ENCODE measurements at regions of chr5 and their contacts with region 1.

Region 1: DNA sequence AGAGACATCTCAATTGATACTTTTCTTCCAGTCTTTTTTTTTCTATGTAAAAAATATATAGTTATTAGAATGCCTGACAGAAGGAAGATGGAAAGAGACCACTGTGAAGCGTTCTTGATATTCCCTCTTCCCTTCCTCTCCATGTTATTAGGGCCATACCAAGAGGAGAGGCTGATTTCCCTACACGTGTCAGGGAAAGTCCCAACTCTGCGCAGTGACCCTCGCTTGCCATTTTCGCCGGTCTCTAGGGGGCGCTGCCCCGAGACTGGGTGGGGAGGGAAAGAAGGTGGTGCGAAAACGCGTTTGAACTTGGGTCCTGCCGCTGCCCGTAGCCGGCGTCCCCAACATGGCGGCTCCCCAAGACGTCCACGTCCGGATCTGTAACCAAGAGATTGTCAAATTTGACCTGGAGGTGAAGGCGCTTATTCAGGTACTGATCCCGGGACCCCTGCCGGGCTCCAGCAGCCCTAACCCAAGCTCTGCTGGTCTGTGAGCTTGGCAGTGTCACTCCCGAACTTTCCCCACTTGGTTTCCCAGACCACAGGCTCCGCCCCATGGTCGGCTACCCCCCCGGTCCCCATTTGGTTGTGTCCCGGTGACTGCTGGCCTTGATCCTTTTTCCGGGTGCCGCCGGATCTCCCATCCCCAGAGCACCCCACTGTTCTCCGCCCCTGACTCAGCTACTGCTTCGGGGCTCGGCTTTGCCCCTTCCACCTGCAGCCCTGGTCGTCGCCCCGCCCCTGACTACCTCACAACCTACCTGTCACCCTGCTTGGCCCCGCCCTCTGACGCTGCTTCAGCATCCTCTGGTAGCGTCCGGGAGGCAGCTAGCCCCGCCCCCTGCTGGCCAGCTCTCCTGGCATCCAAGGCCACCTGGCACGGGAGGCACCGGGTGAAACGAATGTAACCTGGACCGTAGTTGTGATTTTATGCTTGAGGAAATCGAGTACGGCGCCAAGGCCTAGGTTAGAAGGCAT is at the start of gene BNIP1:
- DNase-seq: peak; percentile 91
- H3K4me3 Mint-ChIP-seq: peak within 1 kb of the TSS; percentile 96
- H3K27ac Mint-ChIP-seq: peak within 1 kb of the TSS; percentile 97
- H3K4me1 Mint-ChIP-seq: peaks cover 9% of the 10 kb centered on the region
- H3K27me3 Mint-ChIP-seq: no peaks in the 10 kb centered on the region
- total RNA-seq, gene BNIP1: 22.6 and 25.3 TPM in 2 replicates

Region 2: DNA sequence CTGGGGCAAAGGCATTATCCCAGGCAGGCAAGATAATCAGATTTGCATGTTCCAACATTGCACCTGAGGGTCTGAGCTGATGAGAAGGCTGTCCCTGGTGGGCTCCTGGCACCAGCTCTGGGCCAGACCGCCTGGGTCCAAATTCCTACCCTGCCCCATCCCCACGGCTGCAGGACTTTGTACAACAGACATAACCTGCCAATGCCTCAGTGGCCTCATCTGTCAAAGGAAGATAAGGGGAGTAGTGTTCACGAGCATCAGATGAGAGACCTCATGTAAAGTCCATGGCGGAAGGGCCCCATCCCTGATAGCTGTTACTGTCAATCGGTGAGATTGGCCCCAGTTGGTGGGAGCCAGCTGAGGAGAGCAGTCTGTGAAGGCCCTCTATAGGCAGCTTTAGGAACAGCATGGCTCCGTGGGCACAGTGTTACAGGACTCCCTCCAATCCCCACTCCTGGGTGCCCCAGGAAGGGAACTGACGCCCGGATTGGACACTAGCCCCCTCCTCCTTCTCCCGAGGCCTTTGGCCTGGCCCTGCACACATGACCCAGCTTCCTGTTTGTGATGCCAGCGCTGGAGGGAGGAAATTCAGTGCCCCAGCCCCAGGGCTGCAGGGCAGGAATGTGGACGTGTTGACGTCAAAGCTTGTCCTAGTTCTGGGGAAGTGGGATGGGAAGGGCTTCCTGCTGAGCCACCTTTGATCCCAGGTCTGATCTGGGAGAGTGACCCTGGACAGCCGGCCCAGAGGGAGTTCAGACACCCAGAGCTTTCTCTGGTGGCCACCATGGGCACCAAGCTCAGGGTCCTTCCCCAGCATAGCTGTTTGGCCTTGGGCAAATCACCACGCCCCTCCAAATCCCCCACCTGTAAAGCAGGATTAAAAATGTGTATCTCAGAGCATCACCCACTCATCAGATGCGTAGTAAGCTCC is 429.7 kb before region 1 on chr5:
- intact Hi-C with region 1: loop called (anchors 10 kb)
- DNase-seq: peak; percentile 45
- H3K4me3 Mint-ChIP-seq: no peak overlapping the region
- H3K27ac Mint-ChIP-seq: no peak overlapping the region
- H3K4me1 Mint-ChIP-seq: no peaks in the 10 kb centered on the region
- H3K27me3 Mint-ChIP-seq: peaks cover 7% of the 10 kb centered on the region

Region 3: DNA sequence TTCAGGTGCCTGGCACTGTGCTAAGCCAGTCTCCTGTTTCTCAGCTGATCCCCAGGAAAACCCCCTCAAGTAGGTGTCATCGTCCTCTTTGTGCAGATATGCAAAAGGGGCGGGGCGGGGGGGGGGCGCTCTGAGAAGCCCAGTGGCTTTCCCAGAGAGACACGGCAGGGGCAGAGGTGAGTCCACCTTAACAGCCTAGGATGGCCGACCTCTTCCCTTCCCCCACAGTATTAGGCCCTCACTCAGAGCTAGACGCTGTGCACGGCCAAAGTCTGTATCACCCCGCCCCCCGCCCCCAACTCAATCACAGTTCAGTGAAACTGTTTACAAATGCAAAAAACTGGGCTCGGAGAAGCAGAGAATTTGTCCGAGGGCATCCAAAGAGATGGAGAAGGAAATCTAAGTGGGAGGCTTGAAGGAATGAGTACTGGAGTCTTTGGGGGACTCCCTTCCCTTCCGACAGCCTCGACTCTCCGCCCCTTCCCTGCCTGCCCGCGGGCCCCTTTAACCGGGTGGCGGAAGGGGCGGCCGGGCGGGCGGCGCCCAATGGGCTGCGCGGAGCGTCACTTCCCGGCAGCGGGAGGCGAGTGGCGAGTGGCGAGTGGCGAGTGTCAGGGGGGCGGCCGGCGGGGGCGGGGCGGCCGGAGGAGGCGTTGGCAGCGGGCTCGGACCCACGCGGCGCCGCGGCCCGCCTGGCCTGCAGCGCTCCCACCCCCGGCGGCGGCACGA is 310.6 kb before region 1 on chr5 and contains the start of gene ERGIC1:
- intact Hi-C with region 1: loop called (anchors 1 kb)
- DNase-seq: peak; percentile 79
- H3K4me3 Mint-ChIP-seq: peak within 1 kb of the TSS; percentile 88
- H3K27ac Mint-ChIP-seq: peak within 1 kb of the TSS; percentile 85
- H3K4me1 Mint-ChIP-seq: peaks cover 19% of the 10 kb centered on the region
- H3K27me3 Mint-ChIP-seq: no peaks in the 10 kb centered on the region
- total RNA-seq, gene ERGIC1: 47.4 and 47.9 TPM in 2 replicates

Region 4: DNA sequence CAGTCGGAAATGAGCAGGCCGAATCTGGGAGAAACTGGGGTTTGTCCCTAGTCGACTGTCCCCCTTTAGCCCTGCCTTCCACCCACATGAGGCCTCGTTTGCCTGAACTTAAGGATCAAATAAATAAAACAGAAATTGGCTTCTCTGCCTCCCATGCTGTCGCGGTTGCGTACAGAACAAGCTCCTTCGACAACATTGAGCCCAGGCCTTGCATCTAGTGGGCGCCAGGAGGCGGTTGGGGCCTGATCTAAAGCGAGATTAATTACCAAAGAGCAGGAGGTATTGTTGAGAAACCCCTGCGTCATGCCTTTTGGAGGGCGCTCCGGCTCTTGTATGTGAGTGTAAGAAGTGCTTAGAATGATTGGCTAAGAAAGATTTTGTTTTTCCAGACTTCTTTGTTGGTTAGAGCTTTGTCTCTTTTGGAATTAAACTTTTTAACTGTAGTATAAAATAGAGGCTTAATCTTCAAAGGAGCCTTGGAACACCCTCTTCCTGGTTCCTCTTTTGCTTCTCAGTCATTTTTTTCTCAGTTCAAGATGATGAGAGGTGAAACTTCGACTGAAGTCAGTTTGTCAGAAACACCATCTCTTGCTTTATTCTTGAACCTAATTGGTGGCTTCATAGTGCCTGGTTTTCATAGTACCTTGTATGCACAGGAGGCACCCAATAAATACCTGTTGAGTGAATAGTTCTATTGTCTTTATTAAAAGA is 160.1 kb before region 1 on chr5:
- intact Hi-C with region 1: loop called (anchors 1 kb)
- DNase-seq: peak; percentile 60
- H3K4me3 Mint-ChIP-seq: peak overlapping the region; percentile 96
- H3K27ac Mint-ChIP-seq: peak overlapping the region; percentile 98
- H3K4me1 Mint-ChIP-seq: peaks cover 16% of the 10 kb centered on the region
- H3K27me3 Mint-ChIP-seq: no peaks in the 10 kb centered on the region

Region 5: DNA sequence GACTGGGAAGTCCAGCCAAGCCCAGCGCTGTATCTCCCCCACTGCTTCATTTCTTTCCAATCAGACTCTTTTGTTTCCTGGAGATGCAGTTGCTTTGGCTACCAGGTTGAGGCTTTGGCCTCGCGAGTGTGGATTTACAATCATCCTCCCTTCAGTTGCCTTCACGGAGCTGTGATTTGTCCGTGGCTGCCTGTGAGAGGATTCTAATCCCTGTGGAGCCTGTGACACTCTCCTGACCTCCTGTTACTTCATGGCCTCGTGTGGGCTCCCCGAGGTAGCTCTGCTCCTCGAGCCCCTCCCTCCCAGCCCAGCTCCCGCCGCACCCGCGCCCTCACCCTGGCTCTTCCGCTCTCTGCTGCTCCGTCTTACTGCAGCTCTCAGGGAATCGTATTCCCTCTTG is 291.0 kb after region 1 on chr5:
- intact Hi-C with region 1: no loop called
- DNase-seq: no peak
- H3K4me3 Mint-ChIP-seq: no peak overlapping the region
- H3K27ac Mint-ChIP-seq: no peak overlapping the region
- H3K4me1 Mint-ChIP-seq: no peaks in the 10 kb centered on the region
- H3K27me3 Mint-ChIP-seq: no peaks in the 10 kb centered on the region

Region 6: DNA sequence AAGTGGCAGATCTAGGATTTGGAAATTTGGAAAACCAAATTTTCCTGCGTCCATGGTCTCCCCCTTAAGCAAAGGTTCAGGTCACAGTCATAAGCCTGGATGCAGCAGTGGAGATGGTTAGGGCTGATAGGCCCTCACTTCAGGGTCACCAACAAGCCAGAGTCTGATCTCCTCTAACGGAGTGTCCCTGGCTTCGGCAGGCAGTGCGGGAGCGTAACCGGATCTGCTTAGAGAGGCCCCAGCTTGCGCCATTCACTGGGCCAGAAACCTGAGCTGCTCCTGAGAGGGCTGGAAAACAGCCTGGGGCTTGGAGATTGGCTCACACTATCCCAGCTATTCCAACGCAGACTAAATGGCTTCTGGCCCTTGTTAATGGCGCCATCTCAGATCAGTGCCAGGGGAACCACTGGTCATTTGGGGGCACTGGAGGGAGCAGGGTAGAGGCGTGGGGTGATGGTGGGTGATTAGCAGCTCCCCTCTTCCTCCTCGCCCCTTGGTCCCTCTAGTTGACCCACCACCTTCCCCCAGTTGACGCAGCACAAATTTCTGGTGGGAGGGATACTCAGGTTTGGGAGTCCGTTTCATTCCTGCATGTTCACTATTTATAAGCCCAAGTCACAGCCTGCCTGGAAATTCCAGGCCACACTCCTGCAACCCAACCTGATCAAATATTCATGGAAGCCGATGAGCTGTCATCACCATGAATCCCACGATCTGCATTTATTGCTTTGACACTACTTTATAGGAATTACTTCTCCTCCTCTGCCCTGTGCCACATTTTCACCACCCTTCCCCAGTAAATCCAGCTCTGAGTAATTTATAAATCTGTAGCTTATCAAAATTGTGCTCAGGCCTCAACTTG is 609.0 kb after region 1 on chr5:
- intact Hi-C with region 1: no loop called
- DNase-seq: no peak
- H3K4me3 Mint-ChIP-seq: no peak overlapping the region
- H3K27ac Mint-ChIP-seq: no peak overlapping the region
- H3K4me1 Mint-ChIP-seq: no peaks in the 10 kb centered on the region
- H3K27me3 Mint-ChIP-seq: no peaks in the 10 kb centered on the region

Region 7: GRCh38 chr5:173887610-173888472 is 743.4 kb after region 1 on chr5 and contains the start of gene CPEB4:
- intact Hi-C with region 1: loop called (anchors 10 kb)
- DNase-seq: peak; percentile 96
- H3K4me3 Mint-ChIP-seq: peak within 1 kb of the TSS; percentile 91
- H3K27ac Mint-ChIP-seq: peak within 1 kb of the TSS; percentile 98
- H3K4me1 Mint-ChIP-seq: peaks cover 79% of the 10 kb centered on the region
- H3K27me3 Mint-ChIP-seq: no peaks in the 10 kb centered on the region
- total RNA-seq, gene CPEB4: 9.1 and 14.1 TPM in 2 replicates

Measured in activated T-helper 1 cell treated with anti-CD3 and anti-CD28 coated beads, Interleukin-12 subunit alpha, Interleukin-12 subunit beta, Interleukin-2, Interleukin-4 antibody, amounts not matched to agents 30 ng/mL and 10 ng/mL and 1 ng/mL, durations not matched to agents 14 hours and 24 hours and 36 hours (primary cell).